Caco-2 (cell line): ENCODE measurements at regions of chr2 and their contacts with region 1.

Region 1: GRCh38 chr2:72851321-72851720 is 25.5 kb upstream of the EXOC6B start:
- DNase-seq: peak; percentile 63 to 73
- H3K4me3 ChIP-seq: no peak overlapping the region
- H3K4me3 Mint-ChIP-seq: no peak overlapping the region
- H3K27ac Mint-ChIP-seq: peak overlapping the region; percentile 7
- H3K4me1 ChIP-seq: peaks cover 31% of the 10 kb centered on the region
- H3K4me1 Mint-ChIP-seq: peaks cover 13% of the 10 kb centered on the region
- H3K27me3 ChIP-seq: no peaks in the 10 kb centered on the region
- H3K27me3 Mint-ChIP-seq: no peaks in the 10 kb centered on the region
- CTCF ChIP-seq: no peak

Region 2: GRCh38 chr2:72825241-72826155 is 25.8 kb before region 1 on chr2 and contains the start of gene EXOC6B:
- CTCF ChIA-PET with region 1: no interaction called
- POLR2A ChIA-PET with region 1: interaction called, 5 read pairs
- intact Hi-C with region 1: loop called (anchors 2 kb)
- DNase-seq: peak; percentile 95 to 98
- H3K4me3 ChIP-seq: peak within 1 kb of the TSS; percentile 89
- H3K4me3 Mint-ChIP-seq: peak within 1 kb of the TSS; percentile 87
- H3K27ac Mint-ChIP-seq: peak within 1 kb of the TSS; percentile 98
- H3K4me1 ChIP-seq: peaks cover 52% of the 10 kb centered on the region
- H3K4me1 Mint-ChIP-seq: peaks cover 55% of the 10 kb centered on the region
- H3K27me3 ChIP-seq: no peaks in the 10 kb centered on the region
- H3K27me3 Mint-ChIP-seq: no peaks in the 10 kb centered on the region
- CTCF ChIP-seq: no peak
- total RNA-seq, gene EXOC6B: 36.1 and 38.0 TPM in 2 replicates